Dendritic cell treated with granulocyte-macrophage colony-stimulating factor and Interleukin-4, amounts not matched to agents 40 ng/mL and 50 ng/mL, for 4 days (primary cell): ENCODE measurements at regions of chr18 and their contacts with region 1.

Region 1: GRCh38 chr18:77132371-77133050 is at the start of gene MBP:
- H3K4me3 Mint-ChIP-seq: peak within 1 kb of the TSS; percentile 96
- H3K27ac Mint-ChIP-seq: peak within 1 kb of the TSS; percentile 98
- H3K4me1 Mint-ChIP-seq: peaks cover 61% of the 10 kb centered on the region
- H3K27me3 Mint-ChIP-seq: no peaks in the 10 kb centered on the region

Region 2: GRCh38 chr18:76822510-76823160 is 309.9 kb before region 1 on chr18 and contains the start of gene ZNF236:
- intact Hi-C with region 1: loop called (anchors 10 kb)
- H3K4me3 Mint-ChIP-seq: peak within 1 kb of the TSS; percentile 87
- H3K27ac Mint-ChIP-seq: peak within 1 kb of the TSS; percentile 92
- H3K4me1 Mint-ChIP-seq: peaks cover 53% of the 10 kb centered on the region
- H3K27me3 Mint-ChIP-seq: no peaks in the 10 kb centered on the region

Region 3: DNA sequence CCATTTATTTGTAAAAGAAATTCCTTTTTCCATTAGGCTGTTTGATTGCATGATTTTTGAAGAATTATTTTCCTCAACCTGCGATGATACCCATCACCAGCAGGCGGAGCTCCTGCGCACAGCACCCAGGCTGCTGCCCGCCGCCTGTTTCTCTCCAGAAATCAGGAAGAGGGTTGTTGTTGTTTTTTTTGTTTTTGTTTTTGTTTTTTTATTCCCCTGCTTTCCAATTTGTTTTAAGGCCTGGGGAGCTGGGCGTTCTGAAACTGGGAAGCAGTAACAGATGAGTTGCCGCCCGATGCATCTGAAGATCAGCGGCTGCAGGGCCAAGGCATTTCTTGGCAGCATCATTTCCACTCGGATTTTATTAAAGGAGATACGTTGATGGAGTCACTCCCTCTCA is 132.0 kb before region 1 on chr18:
- intact Hi-C with region 1: loop called (anchors 2 kb)
- H3K4me3 Mint-ChIP-seq: no peak overlapping the region
- H3K27ac Mint-ChIP-seq: peak overlapping the region; percentile 77
- H3K4me1 Mint-ChIP-seq: peaks cover 48% of the 10 kb centered on the region
- H3K27me3 Mint-ChIP-seq: no peaks in the 10 kb centered on the region

Region 4: GRCh38 chr18:77054606-77055428 is 77.7 kb before region 1 on chr18:
- intact Hi-C with region 1: loop called (anchors 2 kb)
- H3K4me3 Mint-ChIP-seq: peak overlapping the region; percentile 66
- H3K27ac Mint-ChIP-seq: peak overlapping the region; percentile 97
- H3K4me1 Mint-ChIP-seq: peaks cover 73% of the 10 kb centered on the region
- H3K27me3 Mint-ChIP-seq: no peaks in the 10 kb centered on the region

Region 5: GRCh38 chr18:77065221-77065981 is 67.1 kb before region 1 on chr18:
- intact Hi-C with region 1: loop called (anchors 2 kb)
- H3K4me3 Mint-ChIP-seq: no peak overlapping the region
- H3K27ac Mint-ChIP-seq: peak overlapping the region; percentile 93
- H3K4me1 Mint-ChIP-seq: peaks cover 92% of the 10 kb centered on the region
- H3K27me3 Mint-ChIP-seq: no peaks in the 10 kb centered on the region

Region 6: DNA sequence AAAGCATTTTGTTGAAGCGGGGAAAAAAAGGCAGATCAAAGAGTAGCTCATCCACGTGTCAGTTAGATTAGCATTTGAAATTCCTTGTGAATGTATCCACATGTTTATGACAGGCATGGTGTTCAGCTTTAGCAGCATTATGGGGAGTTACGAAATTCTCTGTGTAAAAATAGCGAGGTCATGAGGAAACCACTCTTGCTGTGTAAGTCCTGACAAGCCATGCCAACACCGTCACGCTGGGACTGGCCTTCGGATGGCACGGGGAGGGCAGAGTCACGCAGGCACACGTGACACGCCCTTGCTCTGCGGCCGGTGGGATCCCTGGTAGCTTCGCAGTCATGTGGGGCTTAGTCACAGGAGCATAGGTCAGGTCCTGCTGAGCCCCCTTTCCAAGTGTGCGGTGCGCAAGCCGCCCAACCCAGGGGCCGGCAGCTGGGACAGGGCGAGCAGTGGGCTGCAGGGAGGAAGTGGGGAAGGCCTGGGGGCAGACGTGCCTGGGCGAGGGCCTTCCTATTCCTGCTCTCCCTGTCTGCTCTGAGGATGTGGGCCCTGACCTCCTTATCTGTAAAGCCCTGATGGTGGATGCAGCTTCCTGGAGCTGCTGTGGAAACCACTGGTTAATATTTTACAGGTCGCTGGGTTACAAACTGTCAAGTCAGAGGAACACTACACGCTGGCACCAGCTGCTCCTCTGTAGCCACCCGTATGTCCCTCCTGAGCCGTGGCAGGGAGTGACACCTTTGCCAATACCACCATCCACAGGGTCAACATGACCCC is 17.9 kb before region 1 on chr18:
- intact Hi-C with region 1: loop called (anchors 1 kb)
- H3K4me3 Mint-ChIP-seq: peak overlapping the region; percentile 32
- H3K27ac Mint-ChIP-seq: peak overlapping the region; percentile 95
- H3K4me1 Mint-ChIP-seq: peaks cover 92% of the 10 kb centered on the region
- H3K27me3 Mint-ChIP-seq: no peaks in the 10 kb centered on the region

Region 7: GRCh38 chr18:77207540-77207939 is 75.0 kb after region 1 on chr18:
- intact Hi-C with region 1: loop called (anchors 2 kb)
- H3K4me3 Mint-ChIP-seq: no peak overlapping the region
- H3K27ac Mint-ChIP-seq: peak overlapping the region; percentile 63
- H3K4me1 Mint-ChIP-seq: peaks cover 53% of the 10 kb centered on the region
- H3K27me3 Mint-ChIP-seq: peaks cover 5% of the 10 kb centered on the region